ENCODE measurements at regions of chr19 and their contacts with region 1.

Region 1: GRCh38 chr19:11125994-11126685 is 29.4 kb downstream of the SPC24 start:
- DNase-seq: peak; percentile 89 to 91
- H3K4me3 ChIP-seq: no peak overlapping the region
- H3K27ac ChIP-seq: peak overlapping the region; percentile 59 to 69
- H3K4me1 ChIP-seq: no peaks in the 10 kb centered on the region
- H3K27me3 ChIP-seq: no peaks in the 10 kb centered on the region
- CTCF ChIP-seq: peak; percentile 70 to 83 (median 78)
- POLR2A ChIP-seq: no peak

Region 2: DNA sequence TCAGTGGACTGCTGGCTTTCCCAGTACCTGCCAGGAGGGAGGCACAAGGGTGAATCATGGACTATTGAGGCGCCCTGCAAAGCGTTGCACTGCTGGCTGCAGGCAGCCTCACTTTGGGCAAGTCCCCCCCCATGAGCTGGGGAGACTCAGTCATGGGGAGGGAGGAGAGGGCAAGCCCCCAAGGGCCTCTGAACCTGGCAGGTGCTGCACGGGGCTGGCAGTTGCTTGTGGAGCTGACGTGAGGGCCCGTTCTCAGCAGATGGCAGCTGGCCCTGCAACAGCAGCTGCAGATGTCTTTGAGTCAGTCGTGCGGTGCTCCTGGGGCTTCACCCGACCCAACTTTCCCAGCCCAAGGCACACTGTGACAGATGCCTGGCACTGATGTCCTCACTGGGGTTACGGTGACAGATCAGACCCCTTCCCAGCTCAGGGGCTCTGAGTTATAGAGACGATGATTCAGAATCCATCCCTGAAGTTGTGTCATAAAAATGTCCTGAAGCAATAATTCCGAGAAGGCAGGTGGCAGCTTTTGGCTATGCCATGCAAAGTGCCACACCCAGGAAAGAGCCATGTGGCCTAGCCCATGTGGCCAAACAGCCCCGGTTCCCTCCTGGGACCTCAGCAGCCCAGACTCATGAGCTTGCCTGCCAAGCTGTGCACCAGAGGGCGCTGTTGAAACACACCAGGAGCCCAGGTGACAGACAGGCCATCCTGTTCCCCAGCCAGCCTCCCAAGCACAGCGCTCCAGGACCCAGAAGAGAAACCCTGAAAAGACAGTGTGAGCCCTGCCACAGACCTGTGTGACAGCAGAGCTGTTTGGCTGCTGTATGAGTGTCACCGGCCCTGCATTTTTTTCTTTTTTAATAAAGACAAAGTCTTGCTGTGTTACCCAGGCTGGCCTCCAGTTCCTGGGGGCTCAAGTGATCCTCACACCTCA is 90.4 kb before region 1 on chr19:
- intact Hi-C with region 1: loop called (anchors 5 kb)
- DNase-seq: peak; percentile 89 to 91
- H3K4me3 ChIP-seq: no peak overlapping the region
- H3K27ac ChIP-seq: peak overlapping the region in 1 of 2 donors; percentile 23
- H3K4me1 ChIP-seq: no peaks in the 10 kb centered on the region
- H3K27me3 ChIP-seq: no peaks in the 10 kb centered on the region
- CTCF ChIP-seq: peak; percentile 83 to 92 (median 88)
- POLR2A ChIP-seq: peak in 1 of 2 donors; percentile 4

Measured in uterus (tissue), 4 donors.